AG04450 (cell line): ENCODE measurements at regions of chr18 and their contacts with region 1.

Region 1: DNA sequence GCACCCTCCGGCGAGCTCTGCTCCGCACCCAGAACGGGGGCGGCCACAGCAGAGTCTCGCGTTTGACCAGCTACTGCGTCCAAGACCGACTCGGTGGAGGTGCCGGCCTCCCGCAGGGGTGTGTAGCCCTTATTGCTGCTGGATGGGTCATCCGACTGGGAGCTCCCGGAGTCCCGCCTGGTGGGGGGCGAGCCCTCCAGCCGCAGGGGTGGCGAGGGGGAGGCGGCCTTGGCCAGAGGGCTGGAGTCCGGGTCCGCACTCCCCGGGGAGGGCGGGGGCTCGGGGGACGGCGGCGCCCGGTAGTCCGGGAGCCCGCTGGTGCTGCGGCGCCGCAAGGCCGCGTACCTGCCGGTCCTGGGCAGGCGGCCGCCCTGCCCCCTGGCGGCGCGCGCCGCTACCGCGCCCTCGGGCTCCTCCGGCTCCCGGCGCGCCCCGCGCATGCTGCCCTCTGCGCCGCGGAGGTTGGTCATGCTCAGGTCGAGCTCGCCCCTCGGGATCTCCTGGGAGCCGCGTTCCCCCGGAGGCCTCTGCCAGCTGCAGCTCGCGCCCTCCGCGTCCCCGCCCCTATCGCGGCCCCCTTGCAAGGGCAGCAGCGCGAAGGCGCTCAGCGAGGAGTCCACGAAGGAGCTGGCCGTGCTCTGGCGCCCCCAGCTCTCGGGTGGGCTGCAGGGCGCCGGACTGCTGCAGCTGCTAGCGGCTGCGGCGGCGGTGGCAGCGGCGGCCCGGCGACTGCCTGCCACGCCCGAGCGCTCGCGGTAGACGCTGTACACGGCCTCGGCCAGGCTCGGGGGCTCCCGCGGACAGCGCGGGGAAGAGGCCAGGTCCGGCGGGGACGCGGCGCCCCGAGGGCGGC is 4.8 kb downstream of the TMEM200C start:
- DNase-seq: no peak
- H3K4me3 ChIP-seq: peak overlapping the region; percentile 41; the same call in 1 of the 2 replicates
- H3K27ac ChIP-seq: no peak overlapping the region
- H3K27me3 ChIP-seq: no peaks in the 10 kb centered on the region
- CTCF ChIP-seq: peak; percentile 30; the same call in 1 of the 2 replicates

Region 2: DNA sequence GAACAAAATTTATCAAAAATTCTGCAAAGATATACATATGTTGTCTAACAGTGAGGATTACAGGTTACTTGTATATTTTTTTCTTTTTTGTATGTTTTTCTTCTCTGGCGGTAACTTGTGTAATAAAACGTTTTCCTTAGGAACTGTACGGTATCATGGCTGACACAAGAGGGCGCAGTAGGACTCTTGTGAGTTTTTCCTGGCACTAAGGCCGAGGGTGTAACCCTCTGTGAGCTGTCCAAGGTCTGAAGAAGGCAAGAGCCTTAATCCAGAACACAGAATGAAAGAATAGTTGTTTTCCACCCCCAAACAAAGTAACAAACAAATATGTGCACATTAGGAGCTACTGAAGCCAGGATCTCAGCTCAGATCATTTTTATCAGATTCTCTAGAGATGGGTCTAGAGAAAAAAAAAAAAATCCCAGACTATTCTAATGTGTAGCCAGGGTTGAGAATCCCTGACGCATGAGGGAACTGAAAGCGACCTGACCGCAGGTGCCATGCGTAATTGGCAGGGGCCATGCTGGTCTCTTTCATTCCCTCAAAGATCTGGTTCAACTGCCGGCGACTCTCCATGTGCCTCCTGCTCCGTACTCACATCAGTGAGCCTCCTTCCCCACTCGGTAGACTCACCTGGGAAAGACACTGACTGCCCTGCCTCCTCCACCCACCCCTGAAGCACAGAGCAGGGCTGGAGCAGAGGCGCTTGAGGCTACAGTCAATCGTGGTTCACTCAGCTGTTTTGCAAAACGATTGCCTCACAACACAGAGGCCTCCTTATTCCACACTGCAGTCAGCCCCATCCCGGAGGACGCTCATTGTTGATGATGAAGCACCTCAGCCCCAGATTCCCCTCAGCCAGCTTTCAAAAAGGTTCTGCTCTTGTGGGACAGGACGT is 22.1 kb before region 1 on chr18:
- CTCF ChIA-PET with region 1: interaction called, 15 read pairs
- POLR2A ChIA-PET with region 1: no interaction called
- DNase-seq: peak; percentile 75
- H3K4me3 ChIP-seq: no peak overlapping the region
- H3K27ac ChIP-seq: no peak overlapping the region
- H3K27me3 ChIP-seq: peaks cover 6% of the 10 kb centered on the region
- CTCF ChIP-seq: peak; percentile 87

Region 3: GRCh38 chr18:5879479-5879882 is 11.1 kb before region 1 on chr18:
- CTCF ChIA-PET with region 1: interaction called, 47 read pairs
- POLR2A ChIA-PET with region 1: no interaction called
- DNase-seq: peak; percentile 11
- H3K4me3 ChIP-seq: no peak overlapping the region
- H3K27ac ChIP-seq: no peak overlapping the region
- H3K27me3 ChIP-seq: no peaks in the 10 kb centered on the region
- CTCF ChIP-seq: peak; percentile 84

Region 4: GRCh38 chr18:5909130-5909529 is 18.6 kb after region 1 on chr18:
- CTCF ChIA-PET with region 1: interaction called, 12 read pairs
- POLR2A ChIA-PET with region 1: no interaction called
- DNase-seq: no peak
- H3K4me3 ChIP-seq: no peak overlapping the region
- H3K27ac ChIP-seq: no peak overlapping the region
- H3K27me3 ChIP-seq: no peaks in the 10 kb centered on the region
- CTCF ChIP-seq: no peak

Region 5: GRCh38 chr18:6219116-6219717 is 328.7 kb after region 1 on chr18:
- CTCF ChIA-PET with region 1: interaction called, 52 read pairs
- POLR2A ChIA-PET with region 1: no interaction called
- DNase-seq: peak; percentile 43
- H3K4me3 ChIP-seq: no peak overlapping the region
- H3K27ac ChIP-seq: no peak overlapping the region
- H3K27me3 ChIP-seq: no peaks in the 10 kb centered on the region
- CTCF ChIP-seq: peak; percentile 98